B cell (primary cell): ENCODE measurements at regions of chr17 and their contacts with region 1.

Region 1: GRCh38 chr17:42677008-42677857 is 439 bp upstream of the PLEKHH3 start:
- DNase-seq: peak; percentile 99
- ATAC-seq: peak; percentile 77
- H3K4me3 ChIP-seq: peak overlapping the region; percentile 53 to 75 (median 65)
- H3K4me3 Mint-ChIP-seq: peak overlapping the region; percentile 92
- H3K27ac ChIP-seq: no peak overlapping the region
- H3K27ac Mint-ChIP-seq: peak overlapping the region; percentile 86
- H3K4me1 ChIP-seq: peaks cover 72 to 80% of the 10 kb centered on the region in 2 donors
- H3K4me1 Mint-ChIP-seq: peaks cover 62% of the 10 kb centered on the region
- H3K27me3 ChIP-seq: peaks cover 0 to 67% (median 29%) of the 10 kb centered on the region in 4 experiments
- H3K27me3 Mint-ChIP-seq: peaks cover 14% of the 10 kb centered on the region
- CTCF ChIP-seq: no peak

Region 2: GRCh38 chr17:42193969-42194899 is 483.0 kb before region 1 on chr17 and contains the start of gene GHDC:
- CTCF ChIA-PET with region 1: no interaction called
- POLR2A ChIA-PET with region 1: no interaction called
- intact Hi-C with region 1: loop called (anchors 10 kb)
- DNase-seq: peak; percentile 86
- ATAC-seq: peak; percentile 88
- H3K4me3 ChIP-seq: peak within 1 kb of the TSS; percentile 79 to 99 (median 88)
- H3K4me3 Mint-ChIP-seq: peak within 1 kb of the TSS; percentile 99
- H3K27ac ChIP-seq: peak within 1 kb of the TSS; percentile 64 to 79
- H3K27ac Mint-ChIP-seq: peak within 1 kb of the TSS; percentile 94
- H3K4me1 ChIP-seq: peaks cover 24 to 35% of the 10 kb centered on the region in 2 donors
- H3K4me1 Mint-ChIP-seq: peaks cover 38% of the 10 kb centered on the region
- H3K27me3 ChIP-seq: no peaks in the 10 kb centered on the region
- H3K27me3 Mint-ChIP-seq: no peaks in the 10 kb centered on the region
- CTCF ChIP-seq: no peak
- total RNA-seq, gene GHDC: 41.5 and 41.9 TPM in 2 replicates

Region 3: GRCh38 chr17:42536048-42536371 is 141.2 kb before region 1 on chr17 and contains the start of gene NAGLU:
- CTCF ChIA-PET with region 1: no interaction called
- POLR2A ChIA-PET with region 1: interaction called, 5 read pairs
- intact Hi-C with region 1: loop called (anchors 5 kb)
- DNase-seq: peak; percentile 95
- ATAC-seq: peak; percentile 90
- H3K4me3 ChIP-seq: peak within 1 kb of the TSS; percentile 51 to 82 (median 70)
- H3K4me3 Mint-ChIP-seq: peak within 1 kb of the TSS; percentile 93
- H3K27ac ChIP-seq: peak within 1 kb of the TSS; percentile 86 to 94
- H3K27ac Mint-ChIP-seq: peak within 1 kb of the TSS; percentile 87
- H3K4me1 ChIP-seq: peaks cover 24 to 31% of the 10 kb centered on the region in 2 donors
- H3K4me1 Mint-ChIP-seq: peaks cover 41% of the 10 kb centered on the region
- H3K27me3 ChIP-seq: no peaks in the 10 kb centered on the region
- H3K27me3 Mint-ChIP-seq: no peaks in the 10 kb centered on the region
- CTCF ChIP-seq: no peak
- total RNA-seq, gene NAGLU: 44.8 and 47.1 TPM in 2 replicates

Region 4: DNA sequence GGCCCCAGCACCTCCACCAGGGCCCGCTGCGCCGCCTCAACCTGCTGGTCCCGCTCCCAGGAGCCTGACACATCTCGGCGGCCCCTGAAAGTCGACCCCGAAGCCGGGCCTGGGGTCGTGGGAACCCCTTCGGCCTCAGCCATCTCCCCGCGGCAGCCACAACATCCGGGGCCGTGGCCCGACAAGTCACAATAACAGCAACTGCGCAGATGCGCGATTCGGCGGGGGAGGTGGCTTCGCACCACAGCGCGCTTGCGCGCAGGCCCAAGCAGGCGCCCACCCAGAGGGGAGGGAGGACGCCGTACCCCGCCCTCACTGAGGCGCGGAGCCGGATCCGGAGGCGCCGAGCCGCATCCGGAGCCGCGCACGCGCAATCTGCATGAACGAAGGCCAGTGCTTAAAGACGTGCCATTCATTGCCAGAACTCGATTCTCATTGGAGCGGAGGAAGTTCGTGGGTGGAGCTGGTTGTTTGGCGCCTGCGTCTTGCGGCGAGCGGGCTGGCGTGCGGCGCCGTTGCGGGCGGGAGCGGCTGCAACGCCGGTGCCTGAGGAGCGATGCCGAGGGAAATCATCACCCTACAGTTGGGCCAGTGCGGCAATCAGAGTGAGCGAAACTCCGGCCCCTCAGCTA is 67.9 kb before region 1 on chr17 and contains the starts of genes RETREG3 and TUBG1:
- CTCF ChIA-PET with region 1: interaction called, 13 read pairs
- POLR2A ChIA-PET with region 1: interaction called, 19 read pairs
- intact Hi-C with region 1: loop called (anchors 1 kb)
- DNase-seq: peak; percentile 100
- ATAC-seq: peak; percentile 91
- H3K4me3 ChIP-seq: peak within 1 kb of the TSS; percentile 73 to 95 (median 85)
- H3K4me3 Mint-ChIP-seq: peak within 1 kb of the TSS; percentile 100
- H3K27ac ChIP-seq: peak within 1 kb of the TSS; percentile 79 to 95
- H3K27ac Mint-ChIP-seq: peak within 1 kb of the TSS; percentile 98
- H3K4me1 ChIP-seq: peaks cover 38 to 42% of the 10 kb centered on the region in 2 donors
- H3K4me1 Mint-ChIP-seq: peaks cover 51% of the 10 kb centered on the region
- H3K27me3 ChIP-seq: no peaks in the 10 kb centered on the region
- H3K27me3 Mint-ChIP-seq: no peaks in the 10 kb centered on the region
- CTCF ChIP-seq: peak; percentile 37
- total RNA-seq, gene RETREG3: 103 and 108 TPM in 2 replicates
- total RNA-seq, gene TUBG1: 15.7 and 17.2 TPM in 2 replicates

Region 5: GRCh38 chr17:42744806-42745617 is 67.8 kb after region 1 on chr17 and contains the start of gene EZH1:
- CTCF ChIA-PET with region 1: no interaction called
- POLR2A ChIA-PET with region 1: no interaction called
- intact Hi-C with region 1: loop called (anchors 1 kb)
- DNase-seq: peak; percentile 95
- ATAC-seq: peak; percentile 86
- H3K4me3 ChIP-seq: peak within 1 kb of the TSS; percentile 56 to 76 (median 70)
- H3K4me3 Mint-ChIP-seq: peak within 1 kb of the TSS; percentile 99
- H3K27ac ChIP-seq: peak within 1 kb of the TSS; percentile 67 to 92
- H3K27ac Mint-ChIP-seq: peak within 1 kb of the TSS; percentile 99
- H3K4me1 ChIP-seq: peaks cover 25 to 27% of the 10 kb centered on the region in 2 donors
- H3K4me1 Mint-ChIP-seq: peaks cover 29% of the 10 kb centered on the region
- H3K27me3 ChIP-seq: peaks cover 0 to 16% (median under 1%) of the 10 kb centered on the region in 4 experiments
- H3K27me3 Mint-ChIP-seq: peaks cover 18% of the 10 kb centered on the region
- CTCF ChIP-seq: no peak
- total RNA-seq, gene EZH1: 169 and 180 TPM in 2 replicates

Region 6: GRCh38 chr17:42830971-42831370 is 153.7 kb after region 1 on chr17:
- CTCF ChIA-PET with region 1: no interaction called
- POLR2A ChIA-PET with region 1: no interaction called
- intact Hi-C with region 1: no loop called
- DNase-seq: no peak
- ATAC-seq: no peak
- H3K4me3 ChIP-seq: no peak overlapping the region
- H3K4me3 Mint-ChIP-seq: peak overlapping the region; percentile 32
- H3K27ac ChIP-seq: no peak overlapping the region
- H3K27ac Mint-ChIP-seq: no peak overlapping the region
- H3K4me1 ChIP-seq: peaks cover 12 to 20% of the 10 kb centered on the region in 2 donors
- H3K4me1 Mint-ChIP-seq: peaks cover 24% of the 10 kb centered on the region
- H3K27me3 ChIP-seq: no peaks in the 10 kb centered on the region
- H3K27me3 Mint-ChIP-seq: no peaks in the 10 kb centered on the region
- CTCF ChIP-seq: no peak